ENCODE measurements at regions of chr1 and their contacts with region 1.

Region 1: DNA sequence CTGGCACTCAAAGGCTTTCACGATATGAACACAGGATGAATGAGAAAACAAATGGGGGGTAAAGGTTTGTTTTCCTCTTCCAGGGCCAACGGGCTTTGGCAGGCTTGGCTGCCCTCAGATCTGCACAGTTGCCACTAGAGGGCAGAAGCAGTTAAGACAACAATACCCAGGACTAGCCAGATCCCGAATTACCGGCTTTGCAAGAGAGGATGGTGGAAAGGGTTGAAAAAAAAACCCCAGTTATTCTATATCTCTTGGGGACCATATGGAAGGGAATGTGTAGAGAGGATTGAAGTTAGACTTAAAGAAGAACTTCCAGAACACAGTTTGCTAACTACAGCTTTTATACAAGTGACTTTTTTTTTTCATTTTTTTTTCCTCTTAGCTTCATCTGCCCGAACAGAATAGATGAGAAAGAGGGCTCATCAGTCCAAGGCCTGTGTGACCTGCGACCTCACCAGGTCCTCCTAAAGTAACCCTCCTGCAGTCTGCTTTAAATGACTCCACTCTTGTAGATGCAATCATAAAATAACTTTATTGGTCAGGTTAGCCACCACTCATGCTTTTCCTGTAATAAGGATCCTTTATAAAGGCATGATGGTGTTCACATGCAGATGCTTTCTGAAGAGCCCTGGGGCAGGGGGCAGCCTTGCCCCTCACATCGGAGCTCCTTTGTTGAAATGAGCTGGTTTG is 10.7 kb downstream of the FMOD start:
- DNase-seq: peak; percentile 82
- ATAC-seq: peak; percentile 77
- H3K4me3 ChIP-seq: no peak overlapping the region
- H3K4me3 Mint-ChIP-seq: no peak overlapping the region
- H3K27ac ChIP-seq: no peak overlapping the region
- H3K27ac Mint-ChIP-seq: peak overlapping the region; percentile 50
- H3K4me1 ChIP-seq: peaks cover 16 to 25% of the 10 kb centered on the region in 2 donors
- H3K4me1 Mint-ChIP-seq: peaks cover 24% of the 10 kb centered on the region
- H3K27me3 ChIP-seq: peaks cover 0 to 13% (median 1%) of the 10 kb centered on the region in 4 experiments
- H3K27me3 Mint-ChIP-seq: peaks cover 28% of the 10 kb centered on the region
- CTCF ChIP-seq: peak; percentile 95

Region 2: GRCh38 chr1:203299169-203299568 is 41.1 kb before region 1 on chr1:
- CTCF ChIA-PET with region 1: interaction called, 1,776 read pairs
- POLR2A ChIA-PET with region 1: interaction called, 4 read pairs
- intact Hi-C with region 1: no loop called
- DNase-seq: peak; percentile 79
- ATAC-seq: peak; percentile 70
- H3K4me3 ChIP-seq: peak overlapping the region in 3 of 5 experiments; percentile 4 to 26 (median 5)
- H3K4me3 Mint-ChIP-seq: peak overlapping the region; percentile 68
- H3K27ac ChIP-seq: peak overlapping the region; percentile 76 to 87
- H3K27ac Mint-ChIP-seq: peak overlapping the region; percentile 93
- H3K4me1 ChIP-seq: peaks cover 87 to 100% of the 10 kb centered on the region in 2 donors
- H3K4me1 Mint-ChIP-seq: peaks cover 91% of the 10 kb centered on the region
- H3K27me3 ChIP-seq: no peaks in the 10 kb centered on the region
- H3K27me3 Mint-ChIP-seq: no peaks in the 10 kb centered on the region
- CTCF ChIP-seq: no peak

Region 3: GRCh38 chr1:203326830-203327683 is 13.2 kb before region 1 on chr1:
- CTCF ChIA-PET with region 1: interaction called, 227 read pairs
- POLR2A ChIA-PET with region 1: interaction called, 55 read pairs
- intact Hi-C with region 1: loop called (anchors 1 kb)
- DNase-seq: peak; percentile 95
- ATAC-seq: peak; percentile 67
- H3K4me3 ChIP-seq: peak overlapping the region; percentile 35 to 77 (median 56)
- H3K4me3 Mint-ChIP-seq: peak overlapping the region; percentile 88
- H3K27ac ChIP-seq: peak overlapping the region; percentile 96 to 97
- H3K27ac Mint-ChIP-seq: peak overlapping the region; percentile 98
- H3K4me1 ChIP-seq: peaks cover 56 to 62% of the 10 kb centered on the region in 2 donors
- H3K4me1 Mint-ChIP-seq: peaks cover 71% of the 10 kb centered on the region
- H3K27me3 ChIP-seq: no peaks in the 10 kb centered on the region
- H3K27me3 Mint-ChIP-seq: no peaks in the 10 kb centered on the region
- CTCF ChIP-seq: no peak

Region 4: DNA sequence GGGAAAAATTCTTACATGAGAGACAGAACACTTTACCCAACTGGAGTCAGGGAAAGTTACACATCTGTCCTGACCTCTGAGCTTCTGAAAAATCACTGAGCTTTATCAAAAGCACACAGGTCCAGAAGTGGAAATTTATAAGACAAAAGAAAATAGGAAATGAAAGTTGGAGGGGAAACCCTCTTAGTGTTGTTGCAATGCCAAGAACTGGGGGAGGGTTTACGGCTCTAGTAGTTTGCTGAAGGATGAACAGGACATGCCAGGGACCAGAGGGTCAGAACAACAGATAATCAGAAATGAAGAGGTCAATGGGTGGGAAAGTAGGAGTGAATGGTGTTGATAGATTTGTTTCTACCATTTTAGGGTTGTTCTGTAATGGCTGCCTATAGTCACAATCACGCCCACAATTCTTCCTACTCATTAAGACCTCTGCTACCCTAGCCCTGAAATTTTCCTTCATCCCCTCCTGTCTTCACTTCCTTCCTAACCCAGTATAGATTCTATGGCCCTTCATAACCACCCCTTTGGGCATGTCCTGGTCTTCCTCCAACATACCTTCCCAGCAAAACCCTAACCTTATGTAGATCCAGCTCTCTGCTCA is 41.0 kb after region 1 on chr1:
- CTCF ChIA-PET with region 1: interaction called, 59 read pairs
- POLR2A ChIA-PET with region 1: interaction called, 5 read pairs
- intact Hi-C with region 1: no loop called
- DNase-seq: peak; percentile 82
- ATAC-seq: peak; percentile 89
- H3K4me3 ChIP-seq: peak overlapping the region in 2 of 5 experiments; percentile 34 to 49
- H3K4me3 Mint-ChIP-seq: peak overlapping the region; percentile 72
- H3K27ac ChIP-seq: peak overlapping the region; percentile 73 to 82
- H3K27ac Mint-ChIP-seq: peak overlapping the region; percentile 76
- H3K4me1 ChIP-seq: peaks cover 38 to 45% of the 10 kb centered on the region in 2 donors
- H3K4me1 Mint-ChIP-seq: peaks cover 45% of the 10 kb centered on the region
- H3K27me3 ChIP-seq: no peaks in the 10 kb centered on the region
- H3K27me3 Mint-ChIP-seq: no peaks in the 10 kb centered on the region
- CTCF ChIP-seq: no peak

Region 5: GRCh38 chr1:203463469-203464062 is 123.3 kb after region 1 on chr1:
- CTCF ChIA-PET with region 1: interaction called, 16 read pairs
- POLR2A ChIA-PET with region 1: no interaction called
- intact Hi-C with region 1: no loop called
- DNase-seq: no peak
- ATAC-seq: no peak
- H3K4me3 ChIP-seq: no peak overlapping the region
- H3K4me3 Mint-ChIP-seq: no peak overlapping the region
- H3K27ac ChIP-seq: no peak overlapping the region
- H3K27ac Mint-ChIP-seq: no peak overlapping the region
- H3K4me1 ChIP-seq: peaks cover 20 to 35% of the 10 kb centered on the region in 2 donors
- H3K4me1 Mint-ChIP-seq: peaks cover 34% of the 10 kb centered on the region
- H3K27me3 ChIP-seq: no peaks in the 10 kb centered on the region
- H3K27me3 Mint-ChIP-seq: peaks cover 3% of the 10 kb centered on the region
- CTCF ChIP-seq: no peak

Region 6: DNA sequence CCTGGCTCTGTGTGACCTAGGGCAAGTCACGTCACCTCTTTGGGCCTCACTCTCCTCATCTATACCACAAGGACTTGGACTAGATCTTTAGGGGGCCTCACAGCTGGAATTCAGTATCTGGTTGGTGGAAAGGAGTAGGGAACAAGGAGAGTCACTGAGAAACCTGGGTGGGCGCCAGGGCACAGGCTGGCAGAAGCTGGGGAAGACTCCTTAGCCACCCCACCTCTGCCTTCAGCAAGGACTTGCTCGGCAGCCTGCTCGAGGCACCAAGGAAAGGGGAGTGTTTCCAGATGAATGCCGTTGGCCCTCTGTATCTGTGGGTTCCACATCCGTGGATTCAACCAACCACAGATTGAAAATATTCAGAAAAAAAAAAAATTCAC is 152.5 kb after region 1 on chr1:
- CTCF ChIA-PET with region 1: interaction called, 511 read pairs
- POLR2A ChIA-PET with region 1: no interaction called
- intact Hi-C with region 1: loop called (anchors 1 kb)
- DNase-seq: no peak
- ATAC-seq: no peak
- H3K4me3 ChIP-seq: no peak overlapping the region
- H3K4me3 Mint-ChIP-seq: no peak overlapping the region
- H3K27ac ChIP-seq: no peak overlapping the region
- H3K27ac Mint-ChIP-seq: no peak overlapping the region
- H3K4me1 ChIP-seq: peaks cover 0 to 5% of the 10 kb centered on the region in 2 donors
- H3K4me1 Mint-ChIP-seq: peaks cover 7% of the 10 kb centered on the region
- H3K27me3 ChIP-seq: peaks cover 0 to 9% (median 0%) of the 10 kb centered on the region in 4 experiments
- H3K27me3 Mint-ChIP-seq: peaks cover 21% of the 10 kb centered on the region
- CTCF ChIP-seq: no peak

Region 7: GRCh38 chr1:203702130-203702577 is 361.9 kb after region 1 on chr1:
- CTCF ChIA-PET with region 1: interaction called, 41 read pairs
- POLR2A ChIA-PET with region 1: no interaction called
- intact Hi-C with region 1: loop called (anchors 1 kb)
- DNase-seq: peak; percentile 78
- ATAC-seq: peak; percentile 64
- H3K4me3 ChIP-seq: no peak overlapping the region
- H3K4me3 Mint-ChIP-seq: no peak overlapping the region
- H3K27ac ChIP-seq: no peak overlapping the region
- H3K27ac Mint-ChIP-seq: no peak overlapping the region
- H3K4me1 ChIP-seq: peaks cover 0 to 9% of the 10 kb centered on the region in 2 donors
- H3K4me1 Mint-ChIP-seq: peaks cover 2% of the 10 kb centered on the region
- H3K27me3 ChIP-seq: no peaks in the 10 kb centered on the region
- H3K27me3 Mint-ChIP-seq: no peaks in the 10 kb centered on the region
- CTCF ChIP-seq: peak; percentile 90

Measured in B cell (primary cell).